HCT116 (cell line): ENCODE measurements at regions of chr9 and their contacts with region 1.

Region 1: DNA sequence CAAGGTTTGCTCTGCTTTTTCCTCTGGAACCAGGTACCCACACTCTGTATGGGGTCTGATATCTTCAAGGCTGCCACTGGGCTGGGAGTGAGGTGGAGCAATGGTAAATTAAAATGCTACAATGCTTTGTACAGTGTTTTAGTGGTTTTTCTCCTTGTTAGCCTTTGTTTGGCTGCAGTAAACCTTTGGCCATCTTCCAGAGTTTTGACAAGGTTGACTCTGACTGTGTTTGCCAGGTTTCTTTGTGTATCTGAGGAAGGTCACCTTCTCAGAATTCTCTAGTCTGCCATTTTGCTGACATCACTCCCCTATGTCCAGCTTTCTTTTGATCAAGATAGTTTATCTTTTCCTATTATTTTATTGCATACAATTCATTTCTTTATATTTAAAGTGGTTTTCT is 11.2 kb downstream of the SPATA31D1 start:
- DNase-seq: no peak
- ATAC-seq: no peak
- H3K4me3 ChIP-seq: no peak overlapping the region
- H3K27ac ChIP-seq: no peak overlapping the region
- H3K4me1 ChIP-seq: no peaks in the 10 kb centered on the region
- H3K27me3 ChIP-seq: no peaks in the 10 kb centered on the region
- CTCF ChIP-seq: no peak
- POLR2A ChIP-seq: no peak
- RAD21 ChIP-seq: no peak

Region 2: DNA sequence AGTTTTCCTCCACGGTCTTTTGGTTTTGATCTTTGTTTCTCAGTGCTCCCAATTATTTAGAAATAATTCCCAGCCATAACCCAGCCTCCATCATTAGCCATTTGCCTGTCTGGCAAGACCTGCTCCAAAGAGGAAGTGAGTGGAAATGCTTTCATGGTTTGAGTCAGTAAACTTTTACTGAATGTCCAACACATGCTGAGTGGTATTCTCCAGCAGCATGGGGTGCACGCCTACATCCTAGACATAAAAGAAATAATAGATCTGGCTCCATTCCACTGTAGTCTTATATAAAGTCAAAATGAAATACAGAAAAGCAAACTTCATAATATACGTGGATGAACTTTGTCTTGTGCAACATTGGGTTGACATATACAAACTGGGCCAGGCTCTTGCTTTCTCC is 1067.6 kb before region 1 on chr9:
- CTCF ChIA-PET with region 1: no interaction called
- POLR2A ChIA-PET with region 1: no interaction called
- RAD21 ChIA-PET with region 1: no interaction called
- intact Hi-C with region 1: loop called (anchors 5 kb)
- DNase-seq: no peak
- ATAC-seq: no peak
- H3K4me3 ChIP-seq: no peak overlapping the region
- H3K27ac ChIP-seq: no peak overlapping the region
- H3K4me1 ChIP-seq: no peaks in the 10 kb centered on the region
- H3K27me3 ChIP-seq: no peaks in the 10 kb centered on the region
- CTCF ChIP-seq: no peak
- POLR2A ChIP-seq: no peak
- RAD21 ChIP-seq: no peak